ENCODE measurements at regions of chr5 and their contacts with region 1.

Region 1: GRCh38 chr5:67268231-67269021 is 71.8 kb upstream of the CD180 start:
- DNase-seq: peak; percentile 75 to 88 (median 84)
- H3K4me3 ChIP-seq: no peak overlapping the region
- H3K27ac ChIP-seq: peak overlapping the region; percentile 57 to 69
- H3K4me1 ChIP-seq: peaks cover 27% of the 10 kb centered on the region
- H3K27me3 ChIP-seq: no peaks in the 10 kb centered on the region
- CTCF ChIP-seq: no peak
- EP300 ChIP-seq: peak; percentile 92
- POLR2A ChIP-seq: no peak

Region 2: GRCh38 chr5:66724349-66725139 is 543.9 kb before region 1 on chr5:
- intact Hi-C with region 1: no loop called
- DNase-seq: no peak
- H3K4me3 ChIP-seq: no peak overlapping the region
- H3K27ac ChIP-seq: no peak overlapping the region
- H3K4me1 ChIP-seq: peaks cover 6% of the 10 kb centered on the region
- H3K27me3 ChIP-seq: no peaks in the 10 kb centered on the region
- CTCF ChIP-seq: no peak
- EP300 ChIP-seq: no peak
- POLR2A ChIP-seq: no peak

Region 3: GRCh38 chr5:67971223-67971830 is 702.9 kb after region 1 on chr5:
- intact Hi-C with region 1: loop called in 1 of 4 experiments (anchors 10 kb)
- DNase-seq: peak; percentile 56 to 71 (median 63)
- H3K4me3 ChIP-seq: no peak overlapping the region
- H3K27ac ChIP-seq: peak overlapping the region; percentile 44 to 70
- H3K4me1 ChIP-seq: peaks cover 6% of the 10 kb centered on the region
- H3K27me3 ChIP-seq: no peaks in the 10 kb centered on the region
- CTCF ChIP-seq: peak in 1 of 3 donors; percentile 8
- EP300 ChIP-seq: peak; percentile 68
- POLR2A ChIP-seq: no peak